Heart left ventricle (tissue), 16 donors: ENCODE measurements at regions of chr1 and their contacts with region 1.

Region 1: GRCh38 chr1:63662056-63662836 is 69.0 kb downstream of the PGM1 start:
- DNase-seq: peak in 2 of 5 donors; percentile 16 to 42
- ATAC-seq: peak in 3 of 4 donors; percentile 57 to 69 (median 64)
- H3K4me3 ChIP-seq: no peak overlapping the region
- H3K27ac ChIP-seq: peak overlapping the region in 7 of 12 donors; percentile 14 to 67 (median 49)
- H3K4me1 ChIP-seq: peaks cover 0 to 22% (median 2%) of the 10 kb centered on the region in 12 donors
- H3K27me3 ChIP-seq: no peaks in the 10 kb centered on the region
- CTCF ChIP-seq: no peak
- POLR2A ChIP-seq: no peak

Region 2: DNA sequence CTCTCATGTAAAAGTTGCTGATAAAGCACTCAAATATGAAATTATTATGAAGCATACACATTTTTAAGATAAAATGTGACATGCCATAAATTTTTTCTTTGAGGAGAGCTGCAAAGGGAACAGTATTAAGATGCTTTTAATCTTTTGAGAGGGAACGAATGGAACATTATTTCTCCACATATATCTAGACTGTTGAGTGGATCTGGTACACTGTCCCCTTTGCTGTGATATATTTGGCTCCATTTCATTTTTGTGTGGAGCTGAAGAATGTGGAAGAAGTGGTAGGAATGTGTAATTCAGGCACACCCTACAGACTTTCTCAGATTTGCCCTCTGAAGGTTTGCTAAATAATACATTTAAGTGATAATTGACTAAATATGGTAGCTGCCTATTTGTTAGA is 37.3 kb before region 1 on chr1:
- intact Hi-C with region 1: loop called in 1 of 10 experiments (anchors 5 kb)
- DNase-seq: no peak
- ATAC-seq: no peak
- H3K4me3 ChIP-seq: no peak overlapping the region
- H3K27ac ChIP-seq: peak overlapping the region in 3 of 12 donors; percentile 10 to 66 (median 48)
- H3K4me1 ChIP-seq: peaks cover 0 to 58% (median 18%) of the 10 kb centered on the region in 12 donors
- H3K27me3 ChIP-seq: no peaks in the 10 kb centered on the region
- CTCF ChIP-seq: no peak
- POLR2A ChIP-seq: no peak

Region 3: GRCh38 chr1:64527165-64527564 is 864.9 kb after region 1 on chr1:
- intact Hi-C with region 1: no loop called
- DNase-seq: no peak
- ATAC-seq: no peak
- H3K4me3 ChIP-seq: no peak overlapping the region
- H3K27ac ChIP-seq: peak overlapping the region in 1 of 12 donors; percentile 27
- H3K4me1 ChIP-seq: peaks cover 0 to 18% (median 0%) of the 10 kb centered on the region in 12 donors
- H3K27me3 ChIP-seq: no peaks in the 10 kb centered on the region
- CTCF ChIP-seq: no peak
- POLR2A ChIP-seq: no peak